H1 (cell line): ENCODE measurements at regions of chr17 and their contacts with region 1.

Region 1: DNA sequence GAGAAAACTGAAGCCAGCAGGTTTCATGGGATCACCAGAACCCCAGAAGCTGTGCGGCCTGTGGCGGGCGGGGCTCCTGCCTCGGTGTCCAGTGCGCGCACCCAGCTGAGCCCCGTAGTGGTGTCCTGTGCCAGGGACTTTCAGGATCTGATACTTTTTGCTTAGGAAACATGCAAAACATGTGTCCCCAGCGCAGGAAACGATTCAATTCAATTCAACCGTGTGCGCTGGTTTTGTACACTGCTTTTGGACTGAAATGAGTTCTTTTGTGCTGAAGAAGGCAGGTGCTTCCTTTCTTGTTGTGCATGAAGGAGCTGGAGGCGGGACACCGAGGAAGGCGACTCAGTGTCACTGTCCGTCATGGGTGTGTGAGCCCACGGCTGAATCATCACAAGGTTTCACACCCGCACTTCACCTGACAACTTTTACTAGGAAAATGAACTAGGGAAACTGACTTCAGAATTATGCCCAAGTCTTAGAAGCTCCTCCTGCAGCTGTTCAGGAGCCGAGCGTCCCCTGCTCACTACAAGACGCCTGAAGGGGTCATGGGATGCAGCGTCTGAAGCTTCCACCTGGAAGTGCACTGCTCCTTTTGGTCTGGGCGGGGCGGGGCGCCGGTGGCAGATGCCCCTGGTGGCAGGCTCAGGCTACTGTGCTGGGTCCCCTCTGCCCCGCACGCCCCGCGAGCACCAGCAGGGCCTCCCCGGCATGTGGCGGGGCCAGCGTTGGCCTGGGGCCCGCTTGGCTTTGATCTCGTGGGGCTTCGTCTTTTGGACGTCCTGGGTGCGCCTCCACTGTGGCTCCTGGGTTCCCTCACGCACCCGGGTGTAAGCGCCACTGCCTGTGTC is 31.5 kb upstream of the ZNF750 start:
- DNase-seq: no peak
- H3K4me3 ChIP-seq: no peak overlapping the region
- H3K27ac ChIP-seq: no peak overlapping the region
- H3K4me1 ChIP-seq: peaks cover 0 to 8% (median 2%) of the 10 kb centered on the region in 4 experiments; a peak in 5 of 7 replicates
- H3K27me3 ChIP-seq: no peaks in the 10 kb centered on the region
- CTCF ChIP-seq: peak; percentile 41 to 59 (median 42)
- EP300 ChIP-seq: no peak
- POLR2A ChIP-seq: no peak
- RAD21 ChIP-seq: no peak; a peak in 1 of 4 replicates

Region 2: DNA sequence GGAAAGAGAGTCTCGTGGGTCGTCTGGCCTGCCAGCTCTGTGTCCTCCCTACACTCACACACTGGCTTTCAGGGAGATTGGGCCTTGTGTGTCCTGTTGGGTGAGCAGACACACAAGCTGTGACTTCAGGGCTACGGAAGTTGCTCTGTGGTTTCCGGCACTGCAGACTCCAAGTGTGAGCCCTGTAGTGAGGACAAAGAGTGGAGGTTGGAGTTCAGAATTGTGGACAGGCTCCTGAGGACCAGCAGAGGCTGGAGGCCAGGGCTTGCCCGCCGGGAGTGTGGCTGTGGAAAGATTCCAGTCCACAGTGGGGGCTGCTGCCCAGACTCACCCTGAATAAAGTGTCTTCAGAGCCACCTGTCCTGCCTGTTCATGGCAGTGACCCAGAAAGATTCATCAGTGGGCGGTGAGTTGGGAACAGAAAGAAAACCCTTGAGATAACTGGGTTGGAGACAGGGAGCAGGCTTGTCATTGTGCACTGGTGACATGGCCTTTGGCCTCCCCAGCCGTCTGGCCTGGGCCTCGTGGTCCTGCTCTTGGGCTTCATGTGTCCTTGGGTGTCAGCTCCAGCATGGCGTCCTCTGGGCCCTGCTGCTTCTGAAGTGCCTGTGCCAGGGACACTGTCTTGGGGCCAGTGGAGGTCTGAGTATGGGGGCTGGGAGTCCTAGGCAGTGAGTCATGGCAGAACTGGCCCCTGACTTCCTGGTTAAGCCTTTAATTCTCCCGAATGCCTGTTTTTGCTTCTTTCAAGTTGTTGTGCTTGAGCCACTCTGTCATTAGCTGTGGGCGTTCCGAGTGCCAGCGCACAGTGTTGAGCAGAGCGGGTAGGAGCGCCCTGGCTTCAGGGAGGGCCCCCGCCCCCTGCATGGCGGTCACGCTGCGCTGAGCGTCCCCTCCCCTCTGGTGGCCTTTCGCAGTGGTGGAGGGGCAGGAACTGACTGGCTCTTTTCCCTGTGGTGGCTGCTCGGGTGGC is 11.6 kb before region 1 on chr17:
- CTCF ChIA-PET with region 1: interaction called, 12 read pairs
- POLR2A ChIA-PET with region 1: no interaction called
- DNase-seq: no peak
- H3K4me3 ChIP-seq: no peak overlapping the region
- H3K27ac ChIP-seq: no peak overlapping the region
- H3K4me1 ChIP-seq: peaks cover 0 to 8% (median 2%) of the 10 kb centered on the region in 4 experiments; a peak in 2 of 7 replicates
- H3K27me3 ChIP-seq: no peaks in the 10 kb centered on the region
- CTCF ChIP-seq: no peak
- EP300 ChIP-seq: no peak
- POLR2A ChIP-seq: no peak
- RAD21 ChIP-seq: no peak

Region 3: DNA sequence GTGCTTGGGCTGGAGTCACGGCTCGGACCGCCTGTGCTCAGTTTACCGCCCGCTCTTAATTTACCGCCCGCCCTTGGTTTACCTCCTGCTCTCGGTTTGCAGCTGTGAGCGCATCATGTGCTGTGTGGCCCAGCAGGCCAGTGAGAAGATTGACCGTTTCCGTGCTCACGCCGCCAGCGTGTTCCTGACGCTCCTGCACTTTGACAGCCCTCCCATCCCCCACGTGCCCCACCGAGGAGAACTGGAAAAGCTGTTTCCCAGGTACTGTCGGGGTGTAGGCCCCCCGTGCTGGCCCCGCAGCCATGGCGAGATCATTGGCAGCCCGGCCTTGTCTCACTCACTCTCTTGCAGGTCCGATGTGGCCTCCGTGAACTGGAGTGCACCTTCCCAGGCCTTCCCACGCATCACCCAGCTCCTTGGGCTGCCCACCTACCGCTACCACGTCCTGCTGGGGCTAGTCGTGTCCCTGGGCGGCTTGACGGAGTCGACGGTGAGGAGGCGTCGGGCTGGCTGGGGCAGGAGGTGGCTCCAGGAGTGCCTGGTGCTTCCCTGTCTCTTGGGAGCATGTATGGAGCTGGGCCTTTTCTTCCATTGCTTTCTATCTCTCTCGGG is 57.8 kb after region 1 on chr17:
- CTCF ChIA-PET with region 1: no interaction called
- POLR2A ChIA-PET with region 1: no interaction called
- DNase-seq: no peak
- H3K4me3 ChIP-seq: no peak overlapping the region
- H3K27ac ChIP-seq: no peak overlapping the region
- H3K4me1 ChIP-seq: no peaks in the 10 kb centered on the region
- H3K27me3 ChIP-seq: no peaks in the 10 kb centered on the region
- CTCF ChIP-seq: no peak
- EP300 ChIP-seq: no peak
- POLR2A ChIP-seq: no peak
- RAD21 ChIP-seq: no peak